ENCODE measurements at regions of chr14 and their contacts with region 1.

Region 1: GRCh38 chr14:70809543-70810244 is 381 bp upstream of the MAP3K9 start:
- DNase-seq: peak; percentile 87
- H3K4me3 Mint-ChIP-seq: no peak overlapping the region
- H3K27ac Mint-ChIP-seq: no peak overlapping the region
- H3K4me1 Mint-ChIP-seq: peaks cover 11% of the 10 kb centered on the region
- H3K27me3 Mint-ChIP-seq: no peaks in the 10 kb centered on the region

Region 2: GRCh38 chr14:70359181-70360090 is 450.3 kb before region 1 on chr14 and contains the start of gene COX16:
- intact Hi-C with region 1: loop called (anchors 2 kb)
- DNase-seq: peak; percentile 76
- H3K4me3 Mint-ChIP-seq: peak within 1 kb of the TSS; percentile 99
- H3K27ac Mint-ChIP-seq: peak within 1 kb of the TSS; percentile 71
- H3K4me1 Mint-ChIP-seq: peaks cover 21% of the 10 kb centered on the region
- H3K27me3 Mint-ChIP-seq: no peaks in the 10 kb centered on the region
- total RNA-seq, gene COX16: 67.3 and 67.7 TPM in 2 replicates

Region 3: GRCh38 chr14:70600382-70601157 is 209.1 kb before region 1 on chr14 and contains the start of gene MED6:
- intact Hi-C with region 1: loop called (anchors 1 kb)
- DNase-seq: peak; percentile 89
- H3K4me3 Mint-ChIP-seq: peak within 1 kb of the TSS; percentile 100
- H3K27ac Mint-ChIP-seq: peak within 1 kb of the TSS; percentile 92
- H3K4me1 Mint-ChIP-seq: peaks cover 18% of the 10 kb centered on the region
- H3K27me3 Mint-ChIP-seq: peaks cover 4% of the 10 kb centered on the region
- total RNA-seq, gene MED6: 59.3 and 63.7 TPM in 2 replicates

Region 4: GRCh38 chr14:70622111-70622712 is 187.5 kb before region 1 on chr14:
- intact Hi-C with region 1: loop called (anchors 2 kb)
- DNase-seq: peak; percentile 51
- H3K4me3 Mint-ChIP-seq: no peak overlapping the region
- H3K27ac Mint-ChIP-seq: no peak overlapping the region
- H3K4me1 Mint-ChIP-seq: no peaks in the 10 kb centered on the region
- H3K27me3 Mint-ChIP-seq: peaks cover 7% of the 10 kb centered on the region

Region 5: DNA sequence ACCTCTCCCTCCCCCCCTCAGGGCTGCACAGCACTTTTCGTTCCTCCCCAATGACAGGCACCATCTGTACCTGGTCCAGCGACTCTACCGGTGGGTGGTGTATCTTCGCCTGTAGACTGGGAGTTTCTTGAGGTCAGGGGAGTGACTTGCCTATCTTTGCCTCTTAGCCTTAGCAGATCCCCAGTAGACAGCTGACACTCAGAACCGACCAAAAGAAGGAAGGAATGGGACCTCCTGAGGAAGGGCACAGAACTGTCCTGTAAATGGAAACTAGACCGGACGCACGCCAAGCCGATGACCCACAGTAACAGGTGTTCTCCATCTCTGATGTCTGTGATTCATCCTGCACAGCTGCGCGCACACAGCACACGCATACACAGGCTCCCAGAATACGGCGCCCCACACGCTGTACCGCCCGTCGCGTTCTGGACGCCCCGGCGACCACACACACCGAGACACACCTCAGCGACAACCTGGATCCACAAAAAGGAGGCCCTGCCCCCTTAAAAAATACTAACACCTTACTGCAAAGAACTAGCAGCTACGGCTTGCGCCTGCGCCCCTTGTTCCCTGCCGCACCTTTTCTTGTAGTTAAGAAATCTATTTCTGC is 168.7 kb before region 1 on chr14:
- intact Hi-C with region 1: loop called (anchors 5 kb)
- DNase-seq: peak; percentile 37
- H3K4me3 Mint-ChIP-seq: peak overlapping the region; percentile 97
- H3K27ac Mint-ChIP-seq: peak overlapping the region; percentile 88
- H3K4me1 Mint-ChIP-seq: peaks cover 45% of the 10 kb centered on the region
- H3K27me3 Mint-ChIP-seq: peaks cover 9% of the 10 kb centered on the region

Region 6: GRCh38 chr14:70655110-70655826 is 154.4 kb before region 1 on chr14:
- intact Hi-C with region 1: loop called (anchors 2 kb)
- DNase-seq: peak; percentile 72
- H3K4me3 Mint-ChIP-seq: peak overlapping the region; percentile 74
- H3K27ac Mint-ChIP-seq: peak overlapping the region; percentile 97
- H3K4me1 Mint-ChIP-seq: peaks cover 85% of the 10 kb centered on the region
- H3K27me3 Mint-ChIP-seq: no peaks in the 10 kb centered on the region

Region 7: DNA sequence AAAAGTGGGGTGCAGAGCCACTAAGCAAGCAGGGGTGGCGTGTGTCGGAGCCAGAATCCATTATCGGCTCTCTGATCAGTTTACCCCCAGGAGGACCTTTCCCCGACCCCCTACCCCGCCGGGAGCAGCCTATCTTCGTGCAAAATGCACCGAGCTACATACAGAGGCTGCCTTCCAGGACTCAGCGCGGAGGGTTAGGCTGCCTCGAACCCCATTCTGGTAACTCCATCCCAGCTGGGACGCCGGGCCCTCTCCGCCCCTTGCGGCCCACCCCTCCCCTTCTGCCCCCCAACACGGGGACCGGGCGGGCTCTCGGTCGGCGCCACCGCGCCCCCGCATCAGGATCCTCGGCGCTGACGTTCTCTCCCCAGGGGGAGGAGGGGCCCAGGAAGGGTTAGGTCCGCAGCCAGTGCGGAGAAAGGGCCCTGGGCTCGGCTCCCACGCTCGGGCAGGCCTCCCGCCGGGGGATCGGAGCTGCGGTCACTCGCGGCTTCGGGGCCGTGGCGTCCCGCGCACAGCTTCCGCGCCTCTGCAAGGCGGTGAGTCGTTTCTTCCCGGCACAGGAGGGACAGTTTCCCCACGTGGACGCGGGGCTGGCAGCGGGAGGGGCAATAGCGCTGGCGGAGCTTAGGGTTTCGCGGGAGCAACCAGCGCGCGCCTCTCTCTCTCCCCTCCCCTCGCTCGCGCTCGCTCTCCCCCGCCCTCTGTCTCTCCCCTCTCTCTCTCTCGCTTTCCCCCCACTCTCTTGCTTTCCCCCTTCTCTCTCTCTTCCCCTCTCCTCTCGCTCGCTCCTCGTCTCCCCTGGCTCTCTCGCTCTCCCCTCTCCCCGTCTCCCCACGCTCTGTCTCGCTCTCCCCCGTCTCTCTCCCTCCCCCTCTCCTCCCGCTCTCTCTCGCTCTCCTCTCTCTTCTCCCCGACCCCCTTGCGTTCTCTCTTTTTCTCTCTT is 12.2 kb after region 1 on chr14:
- intact Hi-C with region 1: loop called (anchors 1 kb)
- DNase-seq: peak; percentile 48
- H3K4me3 Mint-ChIP-seq: peak overlapping the region; percentile 69
- H3K27ac Mint-ChIP-seq: peak overlapping the region; percentile 61
- H3K4me1 Mint-ChIP-seq: peaks cover 24% of the 10 kb centered on the region
- H3K27me3 Mint-ChIP-seq: peaks cover 3% of the 10 kb centered on the region

Region 8: DNA sequence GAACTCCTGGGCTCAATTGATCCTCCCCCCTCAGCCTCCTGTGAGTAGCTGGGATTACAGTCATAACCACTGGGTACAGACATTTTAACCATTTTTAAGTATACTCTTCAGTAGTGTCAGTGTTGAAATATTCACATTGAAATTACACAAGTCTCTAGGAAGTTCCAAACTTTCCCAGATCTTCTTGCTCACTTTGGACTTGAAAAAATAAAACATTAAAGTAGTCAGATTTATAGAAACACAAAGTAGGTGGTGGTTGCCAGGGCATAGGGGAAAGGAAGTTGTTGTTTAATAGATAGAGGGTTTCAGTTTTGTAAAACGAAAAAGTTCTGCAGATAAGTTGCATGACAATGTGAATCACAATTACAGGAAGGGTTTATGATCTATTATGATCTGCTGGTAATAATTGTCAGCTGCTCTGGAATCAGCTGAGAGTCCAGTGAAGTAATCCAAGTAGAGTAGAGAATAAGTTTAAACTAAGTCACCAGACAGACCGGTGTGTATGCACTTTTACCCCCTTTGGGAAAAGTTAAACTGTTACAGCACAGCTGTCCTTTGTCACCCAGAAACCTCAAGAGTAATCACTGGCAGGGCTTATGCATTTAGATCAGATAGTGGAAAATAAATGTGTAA is 124.9 kb after region 1 on chr14:
- intact Hi-C with region 1: no loop called
- DNase-seq: no peak
- H3K4me3 Mint-ChIP-seq: peak overlapping the region; percentile 53
- H3K27ac Mint-ChIP-seq: peak overlapping the region; percentile 67
- H3K4me1 Mint-ChIP-seq: peaks cover 62% of the 10 kb centered on the region
- H3K27me3 Mint-ChIP-seq: no peaks in the 10 kb centered on the region

Measured in activated T-helper 1 cell treated with anti-CD3 and anti-CD28 coated beads, Interleukin-12 subunit alpha, Interleukin-12 subunit beta, Interleukin-2, Interleukin-4 antibody, amounts not matched to agents 30 ng/mL and 10 ng/mL and 1 ng/mL, durations not matched to agents 14 hours and 24 hours and 36 hours (primary cell).